ENCODE measurements at regions of chr1 and their contacts with region 1.

Region 1: DNA sequence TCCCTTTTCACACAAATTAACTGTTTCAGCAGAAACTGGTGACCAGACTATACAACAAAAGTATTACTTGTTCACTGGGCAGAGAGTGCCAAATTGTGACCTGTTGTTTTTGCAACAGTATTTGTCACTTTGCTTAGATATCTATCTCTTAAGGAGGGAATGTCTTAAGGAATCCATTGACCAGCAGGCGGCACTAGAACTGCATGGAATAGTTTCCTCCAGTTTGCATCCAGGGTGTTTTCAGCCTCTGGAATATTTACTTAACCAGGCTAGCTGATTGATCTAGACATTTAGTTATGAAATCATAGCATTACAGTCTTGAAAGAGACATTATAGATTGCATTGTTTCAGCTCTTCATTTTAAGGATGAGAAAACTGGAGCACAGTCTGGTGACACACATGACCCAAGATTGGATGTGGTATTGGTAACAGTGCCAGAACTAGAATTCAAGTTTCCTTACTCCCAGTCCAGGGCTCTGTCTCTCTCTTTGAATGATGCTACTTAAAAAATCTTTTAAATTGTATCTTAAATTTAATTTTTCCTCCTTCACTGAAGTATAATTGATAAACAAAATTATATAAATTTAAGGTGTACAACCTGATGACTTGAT is 16.9 kb downstream of the RPTN start:
- DNase-seq: peak; percentile 13
- CTCF ChIP-seq: peak; percentile 42

Region 2: DNA sequence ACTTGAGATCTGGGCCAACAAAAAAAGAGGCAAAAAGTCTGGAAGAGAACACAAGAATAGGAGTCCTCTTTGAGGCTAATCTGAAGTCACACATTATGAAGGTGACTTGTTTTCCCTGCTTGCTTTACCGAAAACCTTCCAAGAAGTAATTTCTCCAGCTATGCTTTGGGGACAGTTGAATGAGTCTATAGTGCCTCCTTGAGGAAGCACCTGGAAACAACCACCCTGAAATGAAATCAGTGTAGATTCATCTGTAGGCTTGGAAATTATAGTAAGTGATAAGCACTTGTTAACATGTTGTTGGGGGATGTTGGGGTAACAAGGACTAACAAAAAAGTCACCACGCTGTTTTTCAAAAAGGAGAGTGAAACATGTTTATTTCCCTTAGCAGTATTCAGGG is 40.4 kb after region 1 on chr1:
- CTCF ChIA-PET with region 1: interaction called, 21 read pairs
- POLR2A ChIA-PET with region 1: no interaction called
- DNase-seq: no peak
- CTCF ChIP-seq: peak; percentile 46